Aorta (tissue), 5 donors: ENCODE measurements at regions of chrX and their contacts with region 1.

Region 1: DNA sequence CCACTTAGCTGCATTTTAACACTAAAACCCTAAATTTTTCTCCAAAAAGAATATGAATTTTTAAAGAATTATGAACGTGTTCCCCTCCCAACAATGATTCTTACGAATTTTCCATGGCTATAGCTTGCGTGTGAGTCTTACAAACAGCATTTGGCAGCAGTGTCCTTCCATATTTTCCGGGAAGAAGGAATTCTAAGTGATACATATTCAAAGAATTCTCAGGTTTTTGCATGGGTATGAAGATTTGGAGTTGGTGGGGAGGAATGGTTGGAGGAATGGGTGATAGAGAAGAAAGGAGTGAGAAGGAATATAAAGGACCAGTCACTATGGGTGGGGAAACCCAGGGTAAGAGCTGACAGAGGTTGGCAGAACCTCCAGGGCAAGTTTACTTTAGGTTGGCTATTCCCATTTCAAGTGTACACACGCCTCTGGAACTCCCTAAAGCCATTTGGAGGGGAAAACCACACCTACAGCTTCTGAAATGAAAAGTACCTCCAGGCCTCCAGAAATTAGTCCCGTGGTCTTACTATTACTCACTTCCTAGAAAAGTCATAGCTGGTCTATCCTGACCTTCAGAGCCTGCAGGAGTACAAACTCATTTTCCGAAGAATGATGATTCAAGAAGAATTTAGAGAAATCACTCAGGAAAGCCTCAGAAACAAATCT is 420.8 kb upstream of the DIPK2B start:
- DNase-seq: no peak
- ATAC-seq: no peak
- H3K4me3 ChIP-seq: no peak overlapping the region
- H3K27ac ChIP-seq: peak overlapping the region; percentile 44 to 49
- H3K4me1 ChIP-seq: peaks cover 0 to 2% of the 10 kb centered on the region in 2 donors
- H3K27me3 ChIP-seq: no peaks in the 10 kb centered on the region

Region 2: DNA sequence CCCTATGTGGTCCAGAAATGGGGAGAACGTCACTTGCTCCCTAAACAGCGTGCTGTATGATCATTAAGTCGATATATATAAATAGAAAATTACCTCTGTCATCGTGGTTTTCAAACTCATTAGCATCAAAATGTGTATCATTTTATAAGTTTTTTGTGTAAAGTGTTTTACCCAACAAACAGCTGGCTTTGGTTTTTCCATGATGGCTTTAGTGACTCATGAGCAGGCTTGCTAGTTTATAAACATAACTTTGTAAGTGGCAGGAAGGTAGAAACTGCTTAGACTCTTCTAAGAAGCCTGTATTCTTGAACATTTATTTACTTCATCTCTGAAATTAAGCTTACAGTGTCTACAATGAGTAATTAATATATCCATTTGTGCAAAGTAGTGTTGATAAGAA is 312.4 kb before region 1 on chrX:
- intact Hi-C with region 1: no loop called
- DNase-seq: no peak
- ATAC-seq: no peak
- H3K4me3 ChIP-seq: no peak overlapping the region
- H3K27ac ChIP-seq: no peak overlapping the region
- H3K4me1 ChIP-seq: no peaks in the 10 kb centered on the region
- H3K27me3 ChIP-seq: no peaks in the 10 kb centered on the region

Region 3: DNA sequence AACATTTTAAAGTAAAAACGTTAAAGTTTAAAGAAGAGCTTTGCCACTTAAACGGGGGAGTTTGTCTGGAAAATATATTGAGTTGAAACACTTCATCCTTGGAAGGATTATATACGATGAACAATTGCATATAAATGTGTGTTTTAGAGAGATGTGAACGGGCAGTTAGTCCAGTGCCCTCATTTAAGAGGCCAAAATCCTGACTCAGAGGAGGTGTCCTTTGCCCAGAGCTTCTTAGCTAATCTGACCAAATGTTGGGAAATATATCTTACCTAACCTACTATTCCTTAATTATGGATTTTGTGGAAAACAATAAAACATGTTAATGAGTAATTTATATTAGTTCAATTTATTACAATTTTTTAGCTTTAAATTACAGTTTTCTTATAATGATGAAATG is 93.7 kb before region 1 on chrX:
- intact Hi-C with region 1: loop called in 1 of 2 experiments (anchors 5 kb)
- DNase-seq: no peak
- ATAC-seq: no peak
- H3K4me3 ChIP-seq: no peak overlapping the region
- H3K27ac ChIP-seq: no peak overlapping the region
- H3K4me1 ChIP-seq: no peaks in the 10 kb centered on the region
- H3K27me3 ChIP-seq: no peaks in the 10 kb centered on the region